ENCODE measurements at regions of chr11 and their contacts with region 1.

Region 1: GRCh38 chr11:44036811-44037657 is 10.7 kb upstream of the ACCSL start:
- DNase-seq: peak; percentile 86
- ATAC-seq: peak; percentile 93 to 94

Region 2: GRCh38 chr11:43895601-43896000 is 141.4 kb before region 1 on chr11:
- intact Hi-C with region 1: loop called (anchors 1 to 2 kb)
- DNase-seq: no peak
- ATAC-seq: no peak

Region 3: DNA sequence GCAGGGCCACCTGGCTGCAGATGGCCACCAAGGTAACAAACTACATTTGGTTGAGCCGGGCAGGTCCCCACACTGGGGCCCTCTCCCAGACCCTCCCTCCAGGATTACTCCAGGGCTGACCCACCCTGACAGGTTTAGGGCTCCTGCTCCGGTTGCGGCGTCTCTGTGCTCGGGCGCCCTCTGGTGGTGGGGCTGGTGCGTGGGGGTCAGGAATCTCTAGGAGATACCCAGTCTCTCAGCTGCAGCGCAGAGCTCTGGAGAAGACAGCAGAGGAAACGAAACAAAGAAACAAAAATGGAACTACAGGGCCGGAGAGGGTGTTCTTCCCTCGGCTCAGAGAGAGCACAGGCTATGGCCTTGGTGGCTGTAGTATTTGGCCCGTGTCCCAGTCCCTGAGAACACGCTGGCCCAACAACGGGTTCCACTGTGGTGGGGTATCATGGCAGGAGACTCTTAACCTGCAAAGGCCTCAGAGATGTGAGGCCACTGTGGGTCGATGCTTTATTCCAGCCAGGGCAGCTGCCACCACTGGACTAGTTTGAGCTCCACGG is 92.2 kb before region 1 on chr11:
- intact Hi-C with region 1: loop called in 1 of 2 experiments (anchors 2 kb)
- DNase-seq: peak; percentile 72
- ATAC-seq: peak; percentile 20 to 31

Region 4: GRCh38 chr11:43979571-43980190 is 57.4 kb before region 1 on chr11:
- intact Hi-C with region 1: no loop called
- DNase-seq: no peak
- ATAC-seq: no peak